ENCODE measurements at regions of chr12 and their contacts with region 1.

Region 1: GRCh38 chr12:57111031-57111734 is at the start of gene STAT6:
- DNase-seq: peak; percentile 91
- H3K4me3 ChIP-seq: peak within 1 kb of the TSS; percentile 54 to 82 (median 62)
- H3K27ac ChIP-seq: peak within 1 kb of the TSS; percentile 96 to 99 (median 98)
- H3K4me1 ChIP-seq: peaks cover 15 to 40% (median 28%) of the 10 kb centered on the region in 4 donors
- H3K27me3 ChIP-seq: no peaks in the 10 kb centered on the region
- CTCF ChIP-seq: peak in 2 of 5 experiments; percentile 30 to 42
- EP300 ChIP-seq: no peak
- POLR2A ChIP-seq: peak; percentile 96
- total RNA-seq, gene STAT6: 181 to 318 (median 198) TPM

Region 2: DNA sequence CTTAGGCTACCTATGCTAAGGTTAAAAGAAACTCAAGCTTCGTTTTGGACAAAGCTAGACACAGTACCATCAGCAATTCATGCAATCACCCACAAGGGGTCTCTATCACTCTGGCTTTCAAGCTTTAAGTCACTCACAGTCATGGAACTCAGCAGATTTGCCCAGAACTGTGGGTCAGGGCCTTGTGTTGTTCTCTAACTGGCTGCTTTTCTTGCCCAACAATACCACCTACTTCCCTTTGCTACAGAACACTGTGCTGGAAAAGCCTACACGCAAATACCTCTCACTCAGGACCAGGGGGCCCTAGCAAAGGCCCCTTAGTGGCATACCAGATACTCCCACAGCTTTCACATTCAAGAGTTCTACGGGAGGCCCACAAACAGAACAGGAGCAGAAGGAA is 41.7 kb before region 1 on chr12:
- in situ Hi-C with region 1: loop called in 2 of 4 experiments (anchors 5 kb)
- intact Hi-C with region 1: loop called (anchors 5 kb)
- DNase-seq: peak; percentile 66
- H3K4me3 ChIP-seq: no peak overlapping the region
- H3K27ac ChIP-seq: peak overlapping the region; percentile 57 to 81 (median 78)
- H3K4me1 ChIP-seq: peaks cover 0 to 14% (median 4%) of the 10 kb centered on the region in 4 donors
- H3K27me3 ChIP-seq: no peaks in the 10 kb centered on the region
- CTCF ChIP-seq: peak; percentile 82 to 95 (median 90)
- EP300 ChIP-seq: no peak
- POLR2A ChIP-seq: no peak

Region 3: DNA sequence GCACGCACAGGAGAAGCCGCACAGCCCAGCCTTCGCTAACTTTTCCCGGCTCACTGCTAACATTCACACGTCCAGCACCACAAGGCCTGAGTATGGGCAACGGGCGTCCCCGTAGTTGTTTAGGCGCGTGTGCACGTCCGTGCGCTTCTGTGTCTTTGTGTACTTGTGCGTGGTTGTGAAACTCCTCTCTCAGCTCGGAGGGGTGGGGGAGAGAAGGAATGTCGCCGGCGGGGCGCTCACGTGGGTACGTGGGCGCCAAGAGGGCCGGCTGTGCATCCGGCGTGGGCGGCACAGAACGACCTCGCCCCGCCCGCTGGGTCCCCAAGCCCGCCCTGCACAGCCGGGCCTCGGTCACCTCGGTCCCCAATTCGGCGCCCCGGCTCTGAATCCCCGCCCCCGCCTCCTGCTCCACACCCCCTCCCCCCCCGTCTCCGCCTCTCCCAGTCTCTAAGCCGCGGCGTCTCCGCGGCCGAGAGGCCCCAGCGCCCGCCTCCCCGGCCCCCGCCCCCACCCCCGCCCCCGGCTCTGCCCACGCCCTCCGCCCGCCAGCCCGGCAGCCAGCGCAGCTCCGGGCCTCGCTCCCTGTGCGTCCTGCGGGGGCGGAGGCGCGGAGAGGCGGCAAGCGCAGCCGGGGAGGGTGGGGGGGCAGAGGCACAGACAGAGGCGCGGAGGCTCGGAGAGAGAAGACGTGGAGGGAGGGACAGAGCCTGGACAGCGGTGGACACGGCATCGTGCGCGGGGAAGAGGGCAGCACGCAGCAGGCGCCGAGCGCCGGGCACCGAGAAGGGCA is 22.5 kb before region 1 on chr12 and contains the start of gene NAB2:
- in situ Hi-C with region 1: no loop called
- intact Hi-C with region 1: loop called (anchors 2 kb)
- DNase-seq: peak; percentile 96
- H3K4me3 ChIP-seq: peak within 1 kb of the TSS; percentile 52 to 89 (median 72)
- H3K27ac ChIP-seq: peak within 1 kb of the TSS; percentile 92 to 98 (median 96)
- H3K4me1 ChIP-seq: peaks cover 23 to 73% (median 58%) of the 10 kb centered on the region in 4 donors
- H3K27me3 ChIP-seq: no peaks in the 10 kb centered on the region
- CTCF ChIP-seq: no peak
- EP300 ChIP-seq: no peak
- POLR2A ChIP-seq: peak; percentile 67
- total RNA-seq, gene NAB2: 2.6 to 9.1 (median 4.7) TPM